SK-N-SH (cell line): ENCODE measurements at regions of chr2 and their contacts with region 1.

Region 1: GRCh38 chr2:11688222-11689069 is 18.5 kb upstream of the NTSR2 start:
- DNase-seq: peak; percentile 94
- H3K4me3 ChIP-seq: peak overlapping the region; percentile 27 to 48
- H3K27ac ChIP-seq: no peak overlapping the region
- H3K4me1 ChIP-seq: peaks cover 0 to 12% of the 10 kb centered on the region in 2 experiments; a peak in 2 of 4 replicates
- H3K27me3 ChIP-seq: peaks cover 6% of the 10 kb centered on the region; the same call in 1 of the 2 replicates
- CTCF ChIP-seq: peak; percentile 99
- EP300 ChIP-seq: no peak
- RAD21 ChIP-seq: peak; percentile 92

Region 2: DNA sequence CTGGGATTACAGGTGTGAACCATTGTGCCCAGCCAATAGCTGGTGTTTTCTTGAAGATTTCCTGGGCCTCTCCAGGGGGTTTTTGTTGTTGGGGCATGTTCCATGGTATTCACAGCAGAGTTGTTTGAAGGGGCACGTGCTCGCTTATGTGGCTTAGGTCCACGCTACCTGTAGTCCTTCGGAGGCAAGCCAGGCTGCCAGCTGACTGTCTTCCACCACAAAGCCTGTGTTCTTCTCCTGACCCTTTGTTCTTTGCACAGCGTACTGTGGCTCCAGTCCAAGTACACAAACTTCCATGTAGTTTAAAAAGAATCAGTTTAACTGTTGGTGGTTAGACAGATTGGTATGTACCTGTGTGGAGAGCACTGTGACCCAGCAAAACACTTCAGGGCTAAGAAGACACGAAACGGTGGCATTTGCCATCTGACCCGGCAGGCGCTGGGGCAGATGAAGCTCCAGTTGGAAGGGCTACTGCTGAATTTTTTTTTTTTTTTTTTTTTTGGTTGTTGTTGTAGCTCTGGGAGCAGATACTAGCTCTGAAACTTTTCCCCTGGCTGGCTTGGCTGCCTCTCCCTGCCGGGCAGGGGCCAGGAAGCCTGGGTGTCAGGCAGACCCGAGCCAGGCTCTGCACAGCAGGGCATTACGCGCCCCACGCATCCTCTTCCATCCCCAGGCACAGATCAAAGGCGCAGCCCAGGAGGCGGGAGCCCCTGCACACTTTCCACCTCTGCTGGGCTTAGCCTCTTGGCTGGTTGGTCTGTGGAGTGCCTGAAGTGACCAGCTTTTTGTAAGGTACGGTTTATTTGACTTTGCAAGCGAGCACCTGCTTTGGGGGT is 148.9 kb before region 1 on chr2:
- CTCF ChIA-PET with region 1: no interaction called
- POLR2A ChIA-PET with region 1: no interaction called
- DNase-seq: no peak
- H3K4me3 ChIP-seq: no peak overlapping the region
- H3K27ac ChIP-seq: no peak overlapping the region
- H3K4me1 ChIP-seq: peaks cover 0 to 43% of the 10 kb centered on the region in 2 experiments; a peak in 2 of 4 replicates
- H3K27me3 ChIP-seq: peaks cover 16% of the 10 kb centered on the region; the same call in 1 of the 2 replicates
- CTCF ChIP-seq: no peak
- EP300 ChIP-seq: no peak
- RAD21 ChIP-seq: no peak

Region 3: GRCh38 chr2:11710234-11710975 is 22.0 kb after region 1 on chr2:
- CTCF ChIA-PET with region 1: interaction called, 130 read pairs
- POLR2A ChIA-PET with region 1: interaction called, 4 read pairs
- DNase-seq: no peak
- H3K4me3 ChIP-seq: no peak overlapping the region
- H3K27ac ChIP-seq: peak overlapping the region; percentile 13 to 40; a peak in 3 of 4 replicates
- H3K4me1 ChIP-seq: peaks cover 9 to 18% of the 10 kb centered on the region in 2 experiments; a peak in 3 of 4 replicates
- H3K27me3 ChIP-seq: no peaks in the 10 kb centered on the region
- CTCF ChIP-seq: no peak
- EP300 ChIP-seq: no peak
- RAD21 ChIP-seq: no peak

Region 4: GRCh38 chr2:11726384-11726783 is 37.9 kb after region 1 on chr2:
- CTCF ChIA-PET with region 1: interaction called, 873 read pairs
- POLR2A ChIA-PET with region 1: no interaction called
- DNase-seq: peak; percentile 78
- H3K4me3 ChIP-seq: no peak overlapping the region
- H3K27ac ChIP-seq: peak overlapping the region in 1 of 2 experiments; percentile 81; a peak in 2 of 4 replicates
- H3K4me1 ChIP-seq: peaks cover 0 to 21% of the 10 kb centered on the region in 2 experiments; a peak in 2 of 4 replicates
- H3K27me3 ChIP-seq: peaks cover 10% of the 10 kb centered on the region; the same call in 1 of the 2 replicates
- CTCF ChIP-seq: no peak
- EP300 ChIP-seq: peak in 1 of 2 experiments; percentile 85; a peak in 2 of 4 replicates
- RAD21 ChIP-seq: peak; percentile 23

Region 5: GRCh38 chr2:11764359-11764758 is 75.9 kb after region 1 on chr2:
- CTCF ChIA-PET with region 1: interaction called, 873 read pairs
- POLR2A ChIA-PET with region 1: no interaction called
- DNase-seq: peak; percentile 89
- H3K4me3 ChIP-seq: no peak overlapping the region
- H3K27ac ChIP-seq: peak overlapping the region in 1 of 2 experiments; percentile 97; a peak in 2 of 4 replicates
- H3K4me1 ChIP-seq: peaks cover 0 to 48% of the 10 kb centered on the region in 2 experiments; a peak in 2 of 4 replicates
- H3K27me3 ChIP-seq: no peaks in the 10 kb centered on the region
- CTCF ChIP-seq: no peak
- EP300 ChIP-seq: peak in 1 of 2 experiments; percentile 97; a peak in 2 of 4 replicates
- RAD21 ChIP-seq: peak; percentile 32

Region 6: DNA sequence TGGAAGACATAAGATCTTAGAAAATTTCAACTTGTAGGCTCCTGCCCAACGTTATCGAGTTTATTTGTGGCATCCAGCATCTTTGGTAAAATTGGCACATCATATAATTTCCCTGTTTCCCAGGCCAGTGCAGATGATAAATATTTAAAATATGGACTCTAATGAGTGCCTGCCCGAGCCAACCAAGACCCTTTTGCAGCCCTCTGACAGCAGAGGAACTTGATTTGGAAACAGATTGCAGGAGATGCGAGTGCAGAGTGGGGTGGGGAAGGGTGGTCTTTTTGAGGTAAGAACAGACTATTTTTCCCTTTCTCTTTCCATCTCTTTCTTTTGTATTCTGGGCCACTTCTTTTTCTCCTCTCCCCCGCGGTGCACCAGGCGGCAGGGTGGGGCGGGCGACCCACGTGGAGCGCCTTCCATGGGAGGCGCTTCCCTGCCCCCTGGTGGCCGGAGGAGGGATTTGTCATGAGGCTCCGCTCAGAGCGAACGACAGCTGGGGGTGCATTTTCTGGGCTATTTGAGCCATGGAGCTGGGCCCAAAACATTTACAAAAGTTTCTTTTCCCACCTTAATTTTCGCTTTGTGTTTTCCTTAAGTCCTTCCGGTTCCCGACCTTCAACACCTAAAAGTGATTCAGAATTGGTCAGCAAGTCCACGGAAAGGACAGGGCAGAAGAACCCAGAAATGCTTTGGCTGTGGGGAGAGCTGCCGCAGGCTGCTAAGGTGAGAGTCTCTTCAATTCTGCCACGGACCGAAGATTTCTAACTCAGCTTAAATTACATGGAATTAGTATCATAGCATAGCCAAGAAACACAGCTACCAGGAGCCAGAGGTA is 90.7 kb after region 1 on chr2:
- CTCF ChIA-PET with region 1: interaction called, 886 read pairs
- POLR2A ChIA-PET with region 1: interaction called, 5 read pairs
- DNase-seq: peak; percentile 95
- H3K4me3 ChIP-seq: peak overlapping the region in 1 of 2 experiments; percentile 33; a peak in 1 of 4 replicates
- H3K27ac ChIP-seq: no peak overlapping the region
- H3K4me1 ChIP-seq: peaks cover 6 to 10% of the 10 kb centered on the region in 2 experiments; a peak in 2 of 4 replicates
- H3K27me3 ChIP-seq: no peaks in the 10 kb centered on the region
- CTCF ChIP-seq: peak; percentile 99
- EP300 ChIP-seq: no peak
- RAD21 ChIP-seq: peak; percentile 97

Region 7: GRCh38 chr2:11852526-11853196 is 164.2 kb after region 1 on chr2:
- CTCF ChIA-PET with region 1: no interaction called
- POLR2A ChIA-PET with region 1: no interaction called
- DNase-seq: no peak
- H3K4me3 ChIP-seq: no peak overlapping the region
- H3K27ac ChIP-seq: no peak overlapping the region
- H3K4me1 ChIP-seq: no peaks in the 10 kb centered on the region
- H3K27me3 ChIP-seq: no peaks in the 10 kb centered on the region
- CTCF ChIP-seq: no peak
- EP300 ChIP-seq: no peak
- RAD21 ChIP-seq: no peak